ENCODE measurements at regions of chr20 and their contacts with region 1.

Region 1: GRCh38 chr20:37042986-37043972 is 52.5 kb downstream of the RBL1 start:
- DNase-seq: peak; percentile 40
- H3K4me3 Mint-ChIP-seq: peak overlapping the region; percentile 72
- H3K27ac Mint-ChIP-seq: peak overlapping the region; percentile 87
- H3K4me1 Mint-ChIP-seq: peaks cover 45% of the 10 kb centered on the region
- H3K27me3 Mint-ChIP-seq: no peaks in the 10 kb centered on the region

Region 2: GRCh38 chr20:37071481-37071911 is 28.2 kb after region 1 on chr20:
- intact Hi-C with region 1: loop called (anchors 2 kb)
- DNase-seq: peak; percentile 18
- H3K4me3 Mint-ChIP-seq: peak overlapping the region; percentile 58
- H3K27ac Mint-ChIP-seq: peak overlapping the region; percentile 81
- H3K4me1 Mint-ChIP-seq: peaks cover 40% of the 10 kb centered on the region
- H3K27me3 Mint-ChIP-seq: no peaks in the 10 kb centered on the region